Transverse colon (tissue), 4 donors: ENCODE measurements at regions of chr10 and their contacts with region 1.

Region 1: DNA sequence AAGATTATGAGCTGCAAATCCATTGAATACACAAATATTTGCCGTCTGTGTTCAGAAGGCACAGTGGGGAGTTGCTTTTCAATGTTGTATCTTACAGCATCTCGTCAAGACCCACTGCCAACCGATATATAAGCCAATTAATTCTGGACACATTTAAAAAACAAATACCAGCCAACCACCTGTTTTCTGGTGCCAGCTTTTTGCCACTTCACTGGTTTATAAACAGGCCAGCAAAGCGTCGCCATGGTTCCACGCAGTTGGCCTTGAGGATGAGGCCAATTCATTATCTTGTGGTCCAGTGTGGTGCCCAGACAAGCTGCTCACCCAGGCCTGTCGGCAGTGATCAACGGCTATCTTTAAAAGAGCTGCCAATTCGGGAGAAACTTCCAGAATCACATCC is 321.0 kb downstream of the TCERG1L start:
- DNase-seq: no peak
- H3K4me3 ChIP-seq: no peak overlapping the region
- H3K27ac ChIP-seq: no peak overlapping the region
- H3K4me1 ChIP-seq: no peaks in the 10 kb centered on the region
- H3K27me3 ChIP-seq: no peaks in the 10 kb centered on the region
- CTCF ChIP-seq: no peak
- EP300 ChIP-seq: no peak
- POLR2A ChIP-seq: no peak

Region 2: GRCh38 chr10:131997366-131998049 is 1007.0 kb after region 1 on chr10:
- in situ Hi-C with region 1: no loop called
- intact Hi-C with region 1: loop called (anchors 5 kb)
- DNase-seq: peak; percentile 65
- H3K4me3 ChIP-seq: no peak overlapping the region
- H3K27ac ChIP-seq: peak overlapping the region; percentile 71 to 83 (median 76)
- H3K4me1 ChIP-seq: peaks cover 13 to 22% (median 15%) of the 10 kb centered on the region in 4 donors
- H3K27me3 ChIP-seq: no peaks in the 10 kb centered on the region
- CTCF ChIP-seq: no peak
- EP300 ChIP-seq: peak; percentile 57
- POLR2A ChIP-seq: no peak

Region 3: DNA sequence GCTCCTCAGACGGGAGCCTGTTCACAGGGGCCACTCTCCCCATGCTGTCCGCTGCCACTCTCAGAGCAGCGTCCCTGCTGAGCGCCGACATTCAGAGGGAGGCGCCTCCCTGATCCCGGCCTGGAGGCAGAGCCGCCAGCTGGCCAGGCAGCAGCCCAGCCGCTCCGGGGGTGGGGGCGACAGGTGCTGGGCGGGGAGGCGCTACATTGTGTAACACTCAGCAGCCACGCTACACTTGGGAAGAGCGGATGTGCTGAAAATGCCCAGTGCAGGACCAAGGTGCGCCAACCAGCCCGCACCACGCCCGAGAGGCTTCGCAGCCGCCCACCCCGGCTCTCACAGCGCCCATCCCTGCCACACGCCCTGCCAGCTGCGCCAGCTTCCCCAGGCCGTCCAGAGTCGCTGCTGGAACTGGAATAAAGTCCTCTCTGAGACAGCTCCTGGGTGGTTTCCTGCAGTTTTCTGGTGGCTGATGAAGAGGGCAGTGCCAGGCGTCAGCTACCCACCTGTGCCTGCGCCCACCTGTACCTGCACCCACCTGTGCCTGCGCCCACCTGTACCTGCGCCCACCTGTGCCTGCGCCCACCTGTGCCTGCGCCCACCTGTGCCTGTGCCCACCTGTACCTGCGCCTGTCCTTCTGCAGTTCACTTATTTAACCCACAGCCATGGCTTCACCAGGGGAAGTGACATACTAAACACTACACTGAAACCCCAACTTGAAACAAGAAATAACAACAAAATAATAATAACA is 1291.6 kb after region 1 on chr10:
- in situ Hi-C with region 1: no loop called
- intact Hi-C with region 1: no loop called
- DNase-seq: no peak
- H3K4me3 ChIP-seq: no peak overlapping the region
- H3K27ac ChIP-seq: no peak overlapping the region
- H3K4me1 ChIP-seq: peaks cover 0 to 4% (median 0%) of the 10 kb centered on the region in 4 donors
- H3K27me3 ChIP-seq: peaks cover 25% of the 10 kb centered on the region
- CTCF ChIP-seq: no peak
- EP300 ChIP-seq: no peak
- POLR2A ChIP-seq: no peak